Common myeloid progenitor, CD34-positive (primary cell): ENCODE measurements at regions of chr10 and their contacts with region 1.

Region 1: DNA sequence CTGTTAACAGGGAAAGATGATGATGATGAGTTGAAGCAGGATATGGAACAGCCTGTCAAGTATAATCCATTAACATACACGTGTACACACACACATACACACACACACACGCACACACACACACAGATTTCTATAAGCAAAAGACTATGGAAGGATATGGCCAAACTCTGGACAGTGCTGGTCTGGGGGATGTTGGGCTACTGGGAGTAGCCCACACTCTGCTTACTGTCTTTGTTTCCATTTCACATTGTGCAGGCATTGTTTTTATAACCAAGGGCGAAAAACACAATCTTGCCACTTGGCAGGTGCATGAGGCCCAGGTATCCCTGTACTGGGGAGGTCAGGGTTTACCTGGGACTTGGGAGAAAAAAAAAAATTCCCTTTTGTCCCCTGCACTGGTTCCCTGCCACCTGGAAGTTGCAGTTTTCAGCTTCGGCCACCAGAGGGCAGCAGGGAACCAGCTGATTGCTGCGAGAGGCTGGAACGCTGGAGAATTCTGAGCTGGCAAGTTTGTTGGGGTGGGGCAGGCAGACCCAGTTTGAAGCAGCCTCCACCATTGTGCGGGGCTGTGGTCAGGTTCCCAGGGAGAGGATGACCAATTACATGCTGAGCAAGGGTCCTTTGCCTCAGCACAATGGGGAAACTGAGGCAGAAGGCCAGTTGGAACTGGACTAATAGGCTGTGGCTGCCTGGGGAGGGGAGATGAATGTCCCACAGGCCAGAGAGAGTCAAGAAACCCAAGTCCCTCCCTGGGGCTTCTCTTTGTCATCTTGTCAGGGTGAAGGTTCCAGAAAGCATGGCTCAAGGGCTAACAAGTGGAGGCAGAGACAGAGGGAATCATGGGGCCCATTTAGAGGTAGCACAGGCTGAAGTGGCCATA is 27.3 kb downstream of the PPIF start:
- DNase-seq: peak; percentile 55 to 78 (median 68)
- H3K4me3 ChIP-seq: no peak overlapping the region
- H3K27ac ChIP-seq: no peak overlapping the region
- H3K4me1 ChIP-seq: peaks cover 0 to 12% (median 4%) of the 10 kb centered on the region in 4 experiments
- H3K27me3 ChIP-seq: no peaks in the 10 kb centered on the region

Region 2: DNA sequence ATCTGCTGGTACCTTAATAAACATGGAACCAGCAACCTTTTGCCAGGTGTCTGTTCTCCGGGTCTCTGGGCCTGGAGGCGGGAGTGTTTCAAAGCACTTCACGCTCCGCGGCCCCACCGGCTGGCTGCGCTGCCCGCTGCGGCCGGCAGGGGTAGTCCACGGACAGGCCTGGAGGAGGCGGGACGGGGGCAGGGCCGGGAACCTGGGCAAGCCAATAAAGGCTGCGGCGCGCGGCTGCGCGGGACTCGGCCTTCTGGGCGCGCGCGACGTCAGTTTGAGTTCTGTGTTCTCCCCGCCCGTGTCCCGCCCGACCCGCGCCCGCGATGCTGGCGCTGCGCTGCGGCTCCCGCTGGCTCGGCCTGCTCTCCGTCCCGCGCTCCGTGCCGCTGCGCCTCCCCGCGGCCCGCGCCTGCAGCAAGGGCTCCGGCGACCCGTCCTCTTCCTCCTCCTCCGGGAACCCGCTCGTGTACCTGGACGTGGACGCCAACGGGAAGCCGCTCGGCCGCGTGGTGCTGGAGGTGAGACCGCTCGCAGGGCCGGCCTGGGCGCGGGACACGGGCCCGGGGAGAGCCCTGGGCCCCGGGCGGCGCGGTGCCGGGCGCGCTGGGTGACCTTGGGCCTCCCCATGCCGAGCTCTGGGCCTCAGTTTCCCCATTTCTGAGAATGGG is 27.2 kb before region 1 on chr10 and contains the start of gene PPIF:
- CTCF ChIA-PET with region 1: interaction called, 26 read pairs
- POLR2A ChIA-PET with region 1: no interaction called
- DNase-seq: peak; percentile 92 to 93 (median 93)
- H3K4me3 ChIP-seq: peak within 1 kb of the TSS; percentile 25 to 87 (median 69)
- H3K27ac ChIP-seq: peak within 1 kb of the TSS; percentile 40 to 73
- H3K4me1 ChIP-seq: peaks cover 5 to 67% (median 23%) of the 10 kb centered on the region in 4 experiments
- H3K27me3 ChIP-seq: no peaks in the 10 kb centered on the region

Region 3: DNA sequence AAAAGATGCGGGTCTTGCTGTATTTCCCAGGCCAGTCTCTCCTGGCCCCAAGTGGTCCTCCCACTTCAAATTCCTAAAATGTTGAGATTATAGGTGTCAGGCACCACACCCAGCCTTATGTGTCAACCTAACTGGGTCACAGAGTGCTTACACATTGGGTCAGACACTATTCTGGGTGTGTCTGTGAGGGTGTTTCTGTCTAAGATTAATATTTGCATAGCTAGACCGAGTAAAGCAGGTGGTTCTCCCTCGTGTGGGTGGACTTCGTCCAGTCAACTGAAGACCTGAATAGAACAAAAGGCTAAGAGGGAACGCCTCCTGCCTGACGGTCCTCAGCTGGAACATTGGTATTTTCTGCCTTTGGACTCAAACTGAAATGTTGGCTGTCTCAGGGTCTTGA is 15.8 kb before region 1 on chr10:
- CTCF ChIA-PET with region 1: interaction called, 14 read pairs
- POLR2A ChIA-PET with region 1: no interaction called
- DNase-seq: no peak
- H3K4me3 ChIP-seq: no peak overlapping the region
- H3K27ac ChIP-seq: no peak overlapping the region
- H3K4me1 ChIP-seq: peaks cover 7 to 38% (median 16%) of the 10 kb centered on the region in 4 experiments
- H3K27me3 ChIP-seq: no peaks in the 10 kb centered on the region

Region 4: DNA sequence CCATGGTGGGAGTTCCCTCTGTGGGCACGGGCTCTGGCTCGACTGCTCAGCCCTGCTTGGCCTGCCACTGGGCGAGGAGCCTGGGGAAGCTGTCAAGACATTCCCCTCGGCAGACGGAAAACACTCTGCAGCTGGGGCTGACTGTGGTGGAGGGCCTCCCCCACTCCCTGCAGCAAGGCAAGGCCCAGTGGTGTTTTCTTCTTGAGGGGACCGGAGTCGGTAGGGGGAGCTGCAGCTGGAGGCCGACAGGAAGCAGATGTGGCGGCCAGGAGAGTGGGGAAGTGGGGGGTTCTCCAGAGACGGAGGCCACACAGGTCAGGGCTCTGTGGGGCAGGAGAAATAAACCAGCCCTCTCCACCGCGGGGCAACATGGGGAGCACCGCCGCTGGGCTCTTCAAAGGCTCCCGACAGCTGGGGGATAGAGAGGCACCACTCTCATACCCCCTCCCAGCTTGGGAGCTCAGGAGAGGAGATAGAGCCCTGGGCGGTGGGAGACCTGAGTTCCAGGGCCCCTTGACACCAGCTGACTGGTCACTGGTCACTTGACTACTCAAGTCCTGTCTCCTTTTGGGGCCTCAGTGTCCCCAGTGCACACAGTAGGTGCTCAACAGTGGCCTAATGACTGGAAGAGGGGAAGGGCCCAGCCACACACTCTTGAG is 16.1 kb after region 1 on chr10:
- CTCF ChIA-PET with region 1: interaction called, 21 read pairs
- POLR2A ChIA-PET with region 1: no interaction called
- DNase-seq: peak; percentile 55 to 92 (median 91)
- H3K4me3 ChIP-seq: peak overlapping the region in 1 of 7 experiments; percentile 4
- H3K27ac ChIP-seq: no peak overlapping the region
- H3K4me1 ChIP-seq: peaks cover 3 to 12% (median 11%) of the 10 kb centered on the region in 4 experiments
- H3K27me3 ChIP-seq: no peaks in the 10 kb centered on the region

Region 5: GRCh38 chr10:79400146-79401004 is 25.8 kb after region 1 on chr10:
- CTCF ChIA-PET with region 1: interaction called, 11 read pairs
- POLR2A ChIA-PET with region 1: no interaction called
- DNase-seq: peak; percentile 34 to 55 (median 54)
- H3K4me3 ChIP-seq: no peak overlapping the region
- H3K27ac ChIP-seq: no peak overlapping the region
- H3K4me1 ChIP-seq: peaks cover 2 to 43% (median 31%) of the 10 kb centered on the region in 4 experiments
- H3K27me3 ChIP-seq: peaks cover 0 to 22% (median 6%) of the 10 kb centered on the region in 5 experiments

Region 6: DNA sequence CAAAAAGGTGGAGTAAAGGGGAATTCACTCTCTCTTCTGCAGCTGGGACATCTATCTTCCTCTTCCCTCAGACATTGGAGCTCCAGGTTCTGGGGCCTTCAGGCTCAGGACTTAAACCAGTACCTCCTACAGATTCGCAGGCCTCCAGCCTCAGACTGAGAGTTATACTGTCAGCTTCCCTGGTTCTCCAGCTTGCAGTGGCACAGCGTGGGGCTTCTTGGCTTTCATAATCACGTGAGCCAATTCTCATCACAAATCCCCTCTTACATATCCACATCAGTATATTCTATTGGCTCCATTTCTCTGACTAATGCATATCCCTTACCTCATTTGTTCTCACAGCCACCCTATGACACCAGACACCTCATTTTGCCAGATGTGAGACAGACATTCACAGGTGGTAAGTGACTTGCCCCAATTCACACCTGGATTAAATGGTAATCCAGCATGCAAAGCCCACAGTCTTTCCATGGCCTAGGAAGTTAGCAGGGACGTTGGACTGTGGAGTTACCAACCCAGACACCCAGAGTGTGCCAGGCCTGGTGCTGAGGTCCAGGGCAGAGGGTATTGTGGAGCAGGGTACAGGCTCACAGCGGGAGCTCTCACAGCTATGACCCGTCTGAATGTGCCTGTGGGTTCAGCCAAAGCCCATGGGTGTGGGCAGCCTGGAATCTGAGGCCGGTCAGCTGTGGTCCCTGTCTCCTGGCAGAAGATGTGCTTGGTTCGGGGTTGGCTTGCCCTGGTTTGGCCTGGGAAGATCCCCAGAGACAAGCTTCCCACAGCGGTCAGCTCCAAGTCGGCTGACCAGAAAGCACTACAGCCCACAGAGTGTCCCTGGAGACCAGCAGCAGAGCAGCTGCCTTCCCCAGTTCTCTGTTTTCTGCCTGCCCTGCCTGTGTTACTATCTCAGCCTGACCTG is 89.3 kb after region 1 on chr10:
- CTCF ChIA-PET with region 1: interaction called, 52 read pairs
- POLR2A ChIA-PET with region 1: interaction called, 3 read pairs
- DNase-seq: no peak
- H3K4me3 ChIP-seq: no peak overlapping the region
- H3K27ac ChIP-seq: no peak overlapping the region
- H3K4me1 ChIP-seq: peaks cover 0 to 11% (median 2%) of the 10 kb centered on the region in 4 experiments
- H3K27me3 ChIP-seq: peaks cover 0 to 6% (median 0%) of the 10 kb centered on the region in 5 experiments

Region 7: DNA sequence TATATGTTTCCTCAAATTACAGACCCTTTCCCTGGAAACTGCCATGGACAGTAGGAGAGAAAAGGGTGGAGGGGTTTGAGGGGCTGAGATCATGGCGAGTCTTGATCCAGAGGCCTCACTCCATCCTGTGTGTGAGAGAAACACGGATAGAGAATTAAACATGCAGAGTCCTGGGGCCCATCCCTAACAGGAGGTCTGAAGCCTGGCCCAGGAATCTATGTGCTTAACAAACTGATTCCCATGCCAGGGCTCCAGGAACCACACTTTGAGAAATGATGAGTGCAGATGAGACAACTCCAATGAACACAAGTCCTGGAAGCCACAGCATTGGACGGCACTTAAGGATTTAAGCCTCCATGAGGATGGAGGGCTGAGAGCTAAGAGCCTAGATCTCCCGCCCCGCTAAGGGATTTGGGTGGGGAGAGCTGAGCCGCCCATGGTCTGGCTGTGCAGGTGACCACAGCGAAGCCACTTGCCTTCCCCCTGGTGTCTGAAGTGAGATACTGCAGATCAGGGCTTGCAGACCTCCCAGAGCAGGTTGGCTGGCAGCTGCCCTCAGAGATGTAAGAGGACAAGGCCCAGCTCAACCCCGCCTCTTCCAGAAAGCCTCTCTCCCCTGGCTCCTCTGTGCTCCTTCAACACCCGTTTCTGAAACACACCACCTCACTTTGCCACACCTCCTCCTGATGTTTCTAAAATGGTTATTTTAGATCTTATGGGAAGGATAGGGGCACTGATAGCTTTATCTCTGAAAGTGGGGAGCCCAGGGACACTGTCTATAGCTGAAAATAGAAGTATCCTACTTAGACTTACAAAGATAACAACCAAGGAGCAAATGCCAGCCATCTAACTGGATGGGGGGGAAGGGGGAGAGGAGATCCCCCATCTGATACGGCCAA is 113.0 kb after region 1 on chr10:
- CTCF ChIA-PET with region 1: interaction called, 62 read pairs
- POLR2A ChIA-PET with region 1: no interaction called
- DNase-seq: peak; percentile 45 to 63 (median 55)
- H3K4me3 ChIP-seq: no peak overlapping the region
- H3K27ac ChIP-seq: no peak overlapping the region
- H3K4me1 ChIP-seq: peaks cover 0 to 2% (median 0%) of the 10 kb centered on the region in 4 experiments
- H3K27me3 ChIP-seq: peaks cover 0 to 2% (median 0%) of the 10 kb centered on the region in 5 experiments

Region 8: GRCh38 chr10:79628988-79629954 is 254.7 kb after region 1 on chr10:
- CTCF ChIA-PET with region 1: no interaction called
- POLR2A ChIA-PET with region 1: no interaction called
- DNase-seq: peak in 2 of 3 donors; percentile 18 to 28
- H3K4me3 ChIP-seq: no peak overlapping the region
- H3K27ac ChIP-seq: no peak overlapping the region
- H3K4me1 ChIP-seq: peaks cover 0 to 6% (median 0%) of the 10 kb centered on the region in 4 experiments
- H3K27me3 ChIP-seq: no peaks in the 10 kb centered on the region